WTC11 (cell line): ENCODE measurements at regions of chr5 and their contacts with region 1.

Region 1: DNA sequence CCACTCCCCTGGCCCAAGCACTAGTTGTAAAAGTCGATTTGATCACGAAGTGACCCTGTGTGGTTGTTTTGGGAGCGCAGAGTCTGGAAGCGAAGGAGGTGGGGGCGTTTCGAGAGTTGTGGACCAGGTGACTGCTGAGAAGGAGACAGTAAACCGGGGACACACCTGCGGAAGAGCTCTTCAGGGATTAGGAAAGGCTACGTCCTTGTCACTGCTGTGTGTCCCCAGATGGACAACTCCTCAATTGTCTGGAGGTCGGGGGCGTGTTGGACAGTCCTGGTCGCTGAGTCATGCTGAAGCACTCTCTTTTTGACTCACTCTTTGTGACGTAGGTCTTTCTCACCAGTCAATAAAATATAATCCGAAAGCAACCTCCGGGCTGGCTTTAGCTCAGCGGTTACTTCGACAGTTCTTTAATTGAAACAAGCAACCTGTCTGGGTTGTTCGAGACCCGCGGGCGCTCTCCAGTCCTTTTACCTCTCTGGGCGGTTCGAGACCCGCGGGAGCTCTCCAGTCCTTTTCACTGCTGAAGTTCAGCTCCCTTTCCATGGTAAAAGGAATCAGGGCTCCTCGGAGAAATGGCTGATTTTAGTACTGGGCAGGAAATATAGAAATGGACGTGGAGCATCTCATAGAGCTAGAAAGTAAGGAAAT is 10.8 kb downstream of the ZMAT2 start:
- DNase-seq: peak; percentile 77
- ATAC-seq: peak; percentile 83
- H3K4me3 Mint-ChIP-seq: peak overlapping the region; percentile 92
- H3K27ac Mint-ChIP-seq: peak overlapping the region; percentile 77
- H3K4me1 Mint-ChIP-seq: peaks cover 4% of the 10 kb centered on the region; the same call in 1 of the 2 replicates
- H3K27me3 Mint-ChIP-seq: no peaks in the 10 kb centered on the region
- CTCF ChIP-seq: no peak

Region 2: DNA sequence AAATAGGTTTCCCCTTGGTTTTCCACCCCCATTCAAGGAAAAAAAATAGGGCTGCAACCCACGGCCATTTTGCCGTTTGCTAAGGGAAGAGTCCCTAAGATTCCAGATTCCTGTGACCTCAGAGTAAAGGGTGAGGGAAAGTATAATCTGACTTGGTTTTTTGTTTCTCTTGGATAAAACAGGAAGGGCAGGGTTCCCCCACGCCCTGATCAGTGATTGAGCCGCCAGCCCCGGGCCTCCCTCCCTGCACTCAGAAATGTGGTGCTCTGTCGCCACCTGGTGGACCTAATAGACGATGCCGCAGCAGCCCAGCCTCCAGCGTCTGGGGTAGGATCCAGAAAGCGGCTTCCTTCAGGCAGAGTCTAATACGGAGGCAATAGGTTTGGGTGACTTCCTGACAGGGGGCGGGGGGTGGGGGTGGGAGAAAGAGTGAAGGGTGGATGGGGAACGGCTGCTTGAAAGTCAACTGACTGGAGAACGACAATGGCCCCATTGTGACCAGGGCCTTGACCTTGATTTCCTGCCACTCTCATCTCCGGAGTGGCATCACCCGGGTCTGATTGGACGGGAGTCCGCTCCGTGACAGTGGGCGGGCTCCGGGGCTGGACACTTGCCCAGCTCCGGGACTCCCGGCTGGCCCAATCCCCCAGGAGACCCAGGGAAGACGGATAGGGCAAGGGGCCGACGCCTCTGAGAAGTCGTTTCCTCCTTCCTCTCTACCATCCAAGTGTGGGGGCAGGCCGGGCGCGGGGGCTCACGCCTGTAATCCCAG is 553.8 kb before region 1 on chr5:
- CTCF ChIA-PET with region 1: no interaction called
- POLR2A ChIA-PET with region 1: no interaction called
- DNase-seq: peak; percentile 94
- ATAC-seq: peak; percentile 91
- H3K4me3 Mint-ChIP-seq: peak overlapping the region; percentile 67
- H3K27ac Mint-ChIP-seq: no peak overlapping the region
- H3K4me1 Mint-ChIP-seq: peaks cover 28% of the 10 kb centered on the region
- H3K27me3 Mint-ChIP-seq: peaks cover 17% of the 10 kb centered on the region
- CTCF ChIP-seq: peak; percentile 86

Region 3: GRCh38 chr5:140690941-140691924 is 19.8 kb before region 1 on chr5 and contains the starts of genes HARS1 and HARS2:
- CTCF ChIA-PET with region 1: interaction called, 10 read pairs
- POLR2A ChIA-PET with region 1: no interaction called
- DNase-seq: peak; percentile 89
- ATAC-seq: peak; percentile 97
- H3K4me3 Mint-ChIP-seq: peak within 1 kb of the TSS; percentile 100
- H3K27ac Mint-ChIP-seq: peak within 1 kb of the TSS; percentile 98
- H3K4me1 Mint-ChIP-seq: peaks cover 18% of the 10 kb centered on the region
- H3K27me3 Mint-ChIP-seq: no peaks in the 10 kb centered on the region
- CTCF ChIP-seq: no peak
- total RNA-seq, gene HARS1: 51.9 to 55.6 TPM (median 52.5 TPM) in 3 replicates
- total RNA-seq, gene HARS2: 26.8 to 28.9 TPM (median 27.7 TPM) in 3 replicates

Region 4: GRCh38 chr5:140700177-140701144 is 10.6 kb before region 1 on chr5 and contains the start of gene ZMAT2:
- CTCF ChIA-PET with region 1: interaction called, 4 read pairs
- POLR2A ChIA-PET with region 1: interaction called, 10 read pairs
- DNase-seq: peak; percentile 91
- ATAC-seq: peak; percentile 99
- H3K4me3 Mint-ChIP-seq: peak within 1 kb of the TSS; percentile 97
- H3K27ac Mint-ChIP-seq: peak within 1 kb of the TSS; percentile 86
- H3K4me1 Mint-ChIP-seq: peaks cover 23% of the 10 kb centered on the region
- H3K27me3 Mint-ChIP-seq: no peaks in the 10 kb centered on the region
- CTCF ChIP-seq: no peak
- total RNA-seq, gene ZMAT2: 50.3 to 57.2 TPM (median 54.7 TPM) in 3 replicates

Region 5: GRCh38 chr5:140725799-140726471 is 14.9 kb after region 1 on chr5:
- CTCF ChIA-PET with region 1: interaction called, 12 read pairs
- POLR2A ChIA-PET with region 1: no interaction called
- DNase-seq: peak; percentile 80
- ATAC-seq: peak; percentile 95
- H3K4me3 Mint-ChIP-seq: peak overlapping the region; percentile 91
- H3K27ac Mint-ChIP-seq: no peak overlapping the region
- H3K4me1 Mint-ChIP-seq: peaks cover 4% of the 10 kb centered on the region; the same call in 1 of the 2 replicates
- H3K27me3 Mint-ChIP-seq: peaks cover 13% of the 10 kb centered on the region
- CTCF ChIP-seq: no peak

Region 6: DNA sequence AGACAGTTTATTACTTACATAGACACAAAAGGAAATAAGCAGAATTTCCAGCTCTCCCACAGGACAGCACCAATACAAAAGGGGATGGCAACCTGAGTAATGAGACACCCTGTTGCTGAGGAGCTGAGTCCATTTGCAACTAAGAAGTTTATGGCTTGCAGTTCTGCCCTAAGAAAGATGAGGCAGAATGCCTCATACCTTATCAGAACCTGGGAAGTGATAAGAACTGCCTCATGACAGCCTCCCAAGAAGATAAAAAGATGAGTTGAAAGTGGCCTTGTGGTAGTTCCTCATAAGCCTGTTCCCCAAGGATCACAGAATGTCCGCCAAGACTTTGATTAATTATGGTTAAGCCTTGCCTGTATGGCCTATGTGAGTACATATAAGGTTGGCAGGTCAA is 30.9 kb after region 1 on chr5:
- CTCF ChIA-PET with region 1: no interaction called
- POLR2A ChIA-PET with region 1: no interaction called
- DNase-seq: no peak
- ATAC-seq: no peak
- H3K4me3 Mint-ChIP-seq: no peak overlapping the region
- H3K27ac Mint-ChIP-seq: no peak overlapping the region
- H3K4me1 Mint-ChIP-seq: no peaks in the 10 kb centered on the region
- H3K27me3 Mint-ChIP-seq: peaks cover 5% of the 10 kb centered on the region
- CTCF ChIP-seq: no peak

Region 7: GRCh38 chr5:140795259-140795641 is 84.2 kb after region 1 on chr5:
- CTCF ChIA-PET with region 1: no interaction called
- POLR2A ChIA-PET with region 1: no interaction called
- DNase-seq: no peak
- ATAC-seq: peak; percentile 88
- H3K4me3 Mint-ChIP-seq: peak overlapping the region; percentile 87
- H3K27ac Mint-ChIP-seq: 0 out of 2 replicates have a peak overlapping the region, but pooled peaks have one; percentile 27
- H3K4me1 Mint-ChIP-seq: peaks cover 4% of the 10 kb centered on the region; the same call in 1 of the 2 replicates
- H3K27me3 Mint-ChIP-seq: no peaks in the 10 kb centered on the region
- CTCF ChIP-seq: no peak